HEK293 (cell line): ENCODE measurements at regions of chr11 and their contacts with region 1.

Region 1: DNA sequence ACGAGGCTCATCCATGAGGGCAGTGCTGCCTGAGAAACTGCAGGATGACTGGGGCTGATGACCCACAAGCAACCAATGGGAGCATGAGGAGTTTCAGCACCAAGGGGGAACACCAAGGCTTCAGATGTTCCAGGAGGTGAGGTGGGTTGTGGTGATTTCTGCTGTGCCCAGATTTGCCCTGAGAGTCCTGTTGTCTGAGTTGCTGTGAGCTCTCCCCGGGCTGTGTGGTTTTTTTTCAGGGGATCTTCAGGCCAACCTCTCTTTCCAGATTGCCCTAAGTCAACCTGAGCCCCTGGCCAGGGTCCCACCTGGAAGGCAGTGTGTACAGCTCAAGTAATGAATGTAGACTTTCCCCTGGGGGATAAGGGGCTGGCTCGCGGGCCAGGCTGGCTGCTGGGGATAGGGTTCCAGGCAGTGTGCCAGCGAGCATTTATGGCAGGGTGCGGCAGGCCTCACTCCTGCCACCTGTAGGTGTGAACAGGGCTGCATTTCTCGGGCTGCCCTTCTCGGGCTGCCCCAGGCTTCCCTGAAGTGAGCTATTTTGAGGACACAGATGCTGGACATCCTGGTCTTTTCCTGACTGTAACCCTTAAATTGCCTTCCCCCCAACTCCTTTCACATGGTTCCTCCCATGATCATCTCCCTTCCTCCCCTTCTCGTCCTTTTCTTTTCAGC is 9.8 kb downstream of the SLC22A6 start:
- H3K4me3 ChIP-seq: no peak overlapping the region
- H3K27ac ChIP-seq: no peak overlapping the region
- H3K4me1 ChIP-seq: no peaks in the 10 kb centered on the region
- CTCF ChIP-seq: peak; percentile 74; the same call in 1 of the 2 replicates

Region 2: GRCh38 chr11:62921787-62922589 is 53.0 kb before region 1 on chr11:
- CTCF ChIA-PET with region 1: interaction called, 10 read pairs
- POLR2A ChIA-PET with region 1: interaction called, 4 read pairs
- H3K4me3 ChIP-seq: no peak overlapping the region
- H3K27ac ChIP-seq: no peak overlapping the region
- H3K4me1 ChIP-seq: peaks cover 4% of the 10 kb centered on the region; the same call in 1 of the 2 replicates
- CTCF ChIP-seq: no peak

Region 3: GRCh38 chr11:62954478-62954877 is 20.5 kb before region 1 on chr11:
- CTCF ChIA-PET with region 1: interaction called, 12 read pairs
- POLR2A ChIA-PET with region 1: no interaction called
- H3K4me3 ChIP-seq: no peak overlapping the region
- H3K27ac ChIP-seq: no peak overlapping the region
- H3K4me1 ChIP-seq: no peaks in the 10 kb centered on the region
- CTCF ChIP-seq: no peak

Region 4: DNA sequence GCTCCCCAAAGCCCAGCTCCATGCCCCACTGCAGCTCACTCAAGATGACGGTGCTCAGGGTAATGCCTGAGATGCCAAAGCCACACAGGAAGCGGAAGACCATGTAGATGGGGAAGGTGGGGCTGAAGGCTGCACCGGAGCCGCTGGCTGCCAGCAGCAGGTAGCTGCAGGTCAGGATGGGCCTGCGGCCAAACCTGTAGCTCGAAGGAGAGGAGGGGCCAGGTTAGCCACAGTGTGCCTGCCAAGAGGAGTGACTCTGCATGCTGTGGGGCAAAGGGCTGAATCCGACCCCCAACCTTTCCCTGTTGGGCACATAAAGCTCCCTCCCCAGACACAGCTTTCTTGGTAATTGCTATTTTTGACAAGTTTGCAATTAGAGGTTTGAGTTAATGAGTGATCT is 24.7 kb after region 1 on chr11:
- CTCF ChIA-PET with region 1: interaction called, 13 read pairs
- POLR2A ChIA-PET with region 1: no interaction called
- H3K4me3 ChIP-seq: no peak overlapping the region
- H3K27ac ChIP-seq: no peak overlapping the region
- H3K4me1 ChIP-seq: no peaks in the 10 kb centered on the region
- CTCF ChIP-seq: no peak

Region 5: GRCh38 chr11:63023841-63024648 is 49.1 kb after region 1 on chr11:
- CTCF ChIA-PET with region 1: interaction called, 94 read pairs
- POLR2A ChIA-PET with region 1: interaction called, 3 read pairs
- H3K4me3 ChIP-seq: no peak overlapping the region
- H3K27ac ChIP-seq: no peak overlapping the region
- H3K4me1 ChIP-seq: no peaks in the 10 kb centered on the region; the same call in 1 of the 2 replicates
- CTCF ChIP-seq: peak; percentile 74